ENCODE measurements at regions of chr10 and their contacts with region 1.

Region 1: GRCh38 chr10:113960617-113961181 is 83.0 kb upstream of the ADRB1 start:
- DNase-seq: peak; percentile 62
- H3K4me3 Mint-ChIP-seq: no peak overlapping the region
- H3K27ac Mint-ChIP-seq: peak overlapping the region; percentile 70
- H3K4me1 Mint-ChIP-seq: peaks cover 43% of the 10 kb centered on the region
- H3K27me3 Mint-ChIP-seq: peaks cover 1% of the 10 kb centered on the region

Region 2: DNA sequence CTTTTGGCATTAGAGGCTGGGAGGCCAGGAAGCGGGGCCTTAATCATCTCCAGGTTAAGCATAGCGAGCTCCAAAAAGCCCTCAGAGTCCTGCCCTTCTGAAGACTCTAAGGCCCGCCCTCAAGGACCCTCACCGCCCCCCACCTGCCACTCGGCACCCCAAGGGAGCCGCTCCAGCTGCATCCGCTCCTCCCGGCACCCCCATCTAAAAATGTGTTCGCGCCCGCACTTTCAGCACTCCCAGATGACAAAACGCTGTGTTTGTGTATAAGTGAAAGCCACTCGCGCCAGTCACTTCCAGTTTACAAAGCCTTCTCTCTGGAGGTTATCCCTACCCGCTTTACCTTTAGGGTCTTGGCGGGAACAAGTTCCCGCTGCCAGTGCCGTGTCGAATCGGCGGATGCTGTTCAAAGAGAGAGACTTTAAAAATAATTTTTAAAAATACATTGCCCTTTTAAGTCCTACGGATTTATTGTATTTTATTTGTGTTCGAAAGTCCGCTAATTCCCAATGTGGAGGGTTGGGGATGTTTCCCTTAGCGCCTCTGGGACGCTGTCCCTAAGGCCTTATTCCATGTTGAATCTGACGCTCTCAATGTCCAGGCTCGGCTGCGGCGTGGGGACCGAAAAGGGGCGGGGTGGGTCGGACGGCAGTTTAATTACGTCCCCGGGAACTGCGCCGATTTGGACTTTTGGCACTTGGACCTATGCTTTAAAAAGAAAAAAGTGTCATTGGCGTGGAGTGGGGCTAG is 106.5 kb before region 1 on chr10 and contains the starts of genes DCLRE1A and NHLRC2:
- CTCF ChIA-PET with region 1: no interaction called
- POLR2A ChIA-PET with region 1: no interaction called
- intact Hi-C with region 1: loop called (anchors 2 kb)
- DNase-seq: peak; percentile 76
- H3K4me3 Mint-ChIP-seq: peak within 1 kb of the TSS; percentile 87
- H3K27ac Mint-ChIP-seq: peak within 1 kb of the TSS; percentile 96
- H3K4me1 Mint-ChIP-seq: peaks cover 42% of the 10 kb centered on the region
- H3K27me3 Mint-ChIP-seq: no peaks in the 10 kb centered on the region
- total RNA-seq, gene DCLRE1A: 13.8 to 16.6 TPM
- total RNA-seq, gene NHLRC2: 21.8 to 23.7 TPM

Region 3: DNA sequence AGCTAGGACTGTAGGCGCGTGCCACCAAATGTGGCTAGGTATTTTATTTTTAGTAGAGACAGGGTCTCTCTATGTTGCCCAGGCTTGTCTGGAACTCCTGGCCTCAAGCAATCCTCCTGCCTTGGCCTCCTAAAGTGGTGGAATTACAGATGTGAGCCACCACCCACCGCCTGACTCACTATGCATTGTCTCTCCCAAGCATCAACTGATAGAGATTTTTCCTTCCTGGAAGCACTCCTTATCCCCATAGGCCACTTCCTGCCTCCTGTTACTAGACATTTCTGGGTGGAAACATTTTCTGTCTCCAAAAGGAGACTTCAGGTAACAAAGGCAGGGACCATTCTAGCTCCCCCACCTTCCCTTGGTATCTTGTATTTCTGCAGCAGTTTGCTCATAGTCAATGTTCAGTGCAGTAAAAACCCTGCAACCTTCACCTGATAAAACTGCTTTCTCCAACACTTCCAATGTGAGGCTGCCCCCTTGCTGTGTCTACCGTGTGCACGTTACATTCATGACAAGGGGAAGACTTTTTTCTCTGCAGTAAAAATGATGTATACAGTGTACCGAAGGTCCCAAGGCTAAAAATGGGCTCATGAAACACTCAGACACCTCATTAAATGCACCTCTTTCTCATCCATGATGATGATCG is 21.4 kb before region 1 on chr10:
- CTCF ChIA-PET with region 1: no interaction called
- POLR2A ChIA-PET with region 1: no interaction called
- intact Hi-C with region 1: no loop called
- DNase-seq: no peak
- H3K4me3 Mint-ChIP-seq: no peak overlapping the region
- H3K27ac Mint-ChIP-seq: no peak overlapping the region
- H3K4me1 Mint-ChIP-seq: no peaks in the 10 kb centered on the region
- H3K27me3 Mint-ChIP-seq: no peaks in the 10 kb centered on the region

Region 4: GRCh38 chr10:114045136-114046086 is 84.7 kb after region 1 on chr10:
- CTCF ChIA-PET with region 1: no interaction called
- POLR2A ChIA-PET with region 1: no interaction called
- intact Hi-C with region 1: loop called (anchors 2 kb)
- DNase-seq: peak; percentile 19
- H3K4me3 Mint-ChIP-seq: peak overlapping the region; percentile 41
- H3K27ac Mint-ChIP-seq: no peak overlapping the region
- H3K4me1 Mint-ChIP-seq: peaks cover 14% of the 10 kb centered on the region
- H3K27me3 Mint-ChIP-seq: peaks cover 62% of the 10 kb centered on the region

Region 5: GRCh38 chr10:114083040-114083439 is 122.3 kb after region 1 on chr10:
- CTCF ChIA-PET with region 1: no interaction called
- POLR2A ChIA-PET with region 1: no interaction called
- intact Hi-C with region 1: loop called (anchors 5 kb)
- DNase-seq: peak; percentile 31
- H3K4me3 Mint-ChIP-seq: no peak overlapping the region
- H3K27ac Mint-ChIP-seq: no peak overlapping the region
- H3K4me1 Mint-ChIP-seq: no peaks in the 10 kb centered on the region
- H3K27me3 Mint-ChIP-seq: no peaks in the 10 kb centered on the region

Region 6: GRCh38 chr10:114103284-114103683 is 142.6 kb after region 1 on chr10:
- CTCF ChIA-PET with region 1: interaction called, 3 read pairs
- POLR2A ChIA-PET with region 1: no interaction called
- intact Hi-C with region 1: loop called (anchors 5 kb)
- DNase-seq: no peak
- H3K4me3 Mint-ChIP-seq: no peak overlapping the region
- H3K27ac Mint-ChIP-seq: no peak overlapping the region
- H3K4me1 Mint-ChIP-seq: peaks cover 25% of the 10 kb centered on the region
- H3K27me3 Mint-ChIP-seq: peaks cover 26% of the 10 kb centered on the region

Region 7: GRCh38 chr10:114173921-114174694 is 213.4 kb after region 1 on chr10 and contains the start of gene CCDC186:
- CTCF ChIA-PET with region 1: no interaction called
- POLR2A ChIA-PET with region 1: no interaction called
- intact Hi-C with region 1: loop called (anchors 1 kb)
- DNase-seq: peak; percentile 99
- H3K4me3 Mint-ChIP-seq: peak within 1 kb of the TSS; percentile 93
- H3K27ac Mint-ChIP-seq: peak within 1 kb of the TSS; percentile 91
- H3K4me1 Mint-ChIP-seq: peaks cover 33% of the 10 kb centered on the region
- H3K27me3 Mint-ChIP-seq: no peaks in the 10 kb centered on the region
- total RNA-seq, gene CCDC186: 12.6 to 13.8 TPM

Region 8: GRCh38 chr10:114499630-114500190 is 539.0 kb after region 1 on chr10:
- CTCF ChIA-PET with region 1: no interaction called
- POLR2A ChIA-PET with region 1: no interaction called
- intact Hi-C with region 1: loop called (anchors 1 kb)
- DNase-seq: peak; percentile 92
- H3K4me3 Mint-ChIP-seq: peak overlapping the region; percentile 63
- H3K27ac Mint-ChIP-seq: peak overlapping the region; percentile 89
- H3K4me1 Mint-ChIP-seq: peaks cover 89% of the 10 kb centered on the region
- H3K27me3 Mint-ChIP-seq: no peaks in the 10 kb centered on the region